H1 (cell line): ENCODE measurements at regions of chr7 and their contacts with region 1.

Region 1: DNA sequence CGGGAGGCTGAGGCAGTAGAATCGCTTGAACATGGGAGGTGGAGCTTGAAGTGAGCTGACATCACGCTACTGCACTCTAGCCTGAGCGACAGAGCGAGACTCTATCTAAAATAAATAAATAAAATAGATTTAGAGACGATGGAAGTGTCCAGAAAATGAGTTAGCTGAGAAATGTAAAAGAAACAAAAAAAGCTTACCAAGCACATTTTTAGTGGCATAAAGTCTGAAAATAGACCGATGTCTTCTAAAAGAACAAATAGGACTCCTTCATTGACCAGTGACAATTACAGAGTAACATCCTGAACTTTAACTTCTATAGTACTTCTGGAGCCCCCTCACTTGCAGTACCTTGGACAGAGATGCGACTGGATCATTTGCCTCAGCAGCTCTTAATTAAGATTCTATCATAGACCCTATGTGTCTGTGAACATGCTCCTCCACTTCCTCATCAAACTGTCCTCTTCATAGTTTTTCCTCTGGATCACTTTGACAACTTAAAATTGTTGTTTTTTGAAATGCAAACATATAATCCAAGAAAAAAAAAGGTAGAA is 25.2 kb upstream of the SRPK2 start:
- DNase-seq: no peak
- H3K4me3 ChIP-seq: no peak overlapping the region
- H3K27ac ChIP-seq: no peak overlapping the region
- H3K4me1 ChIP-seq: no peaks in the 10 kb centered on the region
- H3K27me3 ChIP-seq: no peaks in the 10 kb centered on the region
- CTCF ChIP-seq: no peak
- EP300 ChIP-seq: no peak
- POLR2A ChIP-seq: no peak
- RAD21 ChIP-seq: no peak

Region 2: GRCh38 chr7:105387621-105388372 is 26.2 kb before region 1 on chr7:
- CTCF ChIA-PET with region 1: no interaction called
- POLR2A ChIA-PET with region 1: no interaction called
- DNase-seq: peak in 1 of 2 experiments; percentile 67
- H3K4me3 ChIP-seq: peak overlapping the region; percentile 81 to 99 (median 88)
- H3K27ac ChIP-seq: no peak overlapping the region; the same call in 1 of the 2 replicates
- H3K4me1 ChIP-seq: peaks cover 0 to 3% (median 0%) of the 10 kb centered on the region in 4 experiments; a peak in 2 of 7 replicates
- H3K27me3 ChIP-seq: no peaks in the 10 kb centered on the region
- CTCF ChIP-seq: no peak
- EP300 ChIP-seq: no peak
- POLR2A ChIP-seq: no peak
- RAD21 ChIP-seq: no peak

Region 3: GRCh38 chr7:105399043-105399725 is 14.8 kb before region 1 on chr7:
- CTCF ChIA-PET with region 1: interaction called, 20 read pairs
- POLR2A ChIA-PET with region 1: no interaction called
- DNase-seq: no peak
- H3K4me3 ChIP-seq: no peak overlapping the region
- H3K27ac ChIP-seq: no peak overlapping the region
- H3K4me1 ChIP-seq: no peaks in the 10 kb centered on the region
- H3K27me3 ChIP-seq: no peaks in the 10 kb centered on the region
- CTCF ChIP-seq: no peak
- EP300 ChIP-seq: no peak
- POLR2A ChIP-seq: no peak
- RAD21 ChIP-seq: no peak

Region 4: DNA sequence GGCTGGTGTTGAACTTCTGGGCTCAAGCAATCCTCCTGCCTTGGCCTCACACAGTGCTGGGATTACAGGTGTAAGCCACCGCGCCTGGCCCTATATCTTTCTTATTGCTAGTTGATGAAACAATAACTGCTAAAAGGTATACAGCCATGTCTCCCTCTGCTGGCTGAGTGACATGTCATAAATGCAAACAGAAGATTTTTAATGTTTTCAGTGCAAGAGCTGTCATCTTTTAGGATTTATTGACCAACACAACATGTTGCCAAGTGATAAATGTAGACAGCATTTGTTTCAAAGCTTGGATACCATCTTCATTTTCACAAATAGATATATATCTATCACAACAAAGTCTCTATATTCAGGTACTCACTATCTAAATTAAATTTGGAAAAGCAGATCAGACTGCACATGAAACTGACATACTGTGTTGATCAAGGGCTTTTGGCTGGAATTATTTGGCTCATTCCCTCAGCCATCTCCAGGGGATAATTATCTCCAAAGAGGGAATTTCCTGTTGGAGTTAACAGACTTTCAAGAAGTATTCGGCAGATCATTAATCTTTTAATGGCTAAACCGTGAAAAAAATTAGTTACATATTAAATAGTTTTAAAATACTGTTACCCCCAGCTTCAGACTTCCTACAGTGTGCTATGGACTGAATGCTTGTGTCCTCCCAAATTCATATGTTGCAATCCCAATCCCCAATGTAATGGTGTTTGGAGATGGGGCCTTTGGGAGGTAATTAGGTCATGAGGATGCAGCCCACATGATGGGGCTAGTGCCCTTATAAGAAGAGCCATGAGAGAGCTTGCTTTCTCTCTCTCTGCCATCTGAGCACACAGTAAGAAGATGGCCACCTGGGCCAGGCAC is 16.0 kb after region 1 on chr7:
- CTCF ChIA-PET with region 1: interaction called, 12 read pairs
- POLR2A ChIA-PET with region 1: no interaction called
- DNase-seq: no peak
- H3K4me3 ChIP-seq: no peak overlapping the region
- H3K27ac ChIP-seq: no peak overlapping the region
- H3K4me1 ChIP-seq: no peaks in the 10 kb centered on the region
- H3K27me3 ChIP-seq: no peaks in the 10 kb centered on the region
- CTCF ChIP-seq: peak in 2 of 3 experiments; percentile 26 to 37; a peak in 3 of 4 replicates
- EP300 ChIP-seq: no peak
- POLR2A ChIP-seq: no peak
- RAD21 ChIP-seq: peak; percentile 53 to 65